Lower lobe of right lung (tissue), 2 donors: ENCODE measurements at regions of chr1 and their contacts with region 1.

Region 1: DNA sequence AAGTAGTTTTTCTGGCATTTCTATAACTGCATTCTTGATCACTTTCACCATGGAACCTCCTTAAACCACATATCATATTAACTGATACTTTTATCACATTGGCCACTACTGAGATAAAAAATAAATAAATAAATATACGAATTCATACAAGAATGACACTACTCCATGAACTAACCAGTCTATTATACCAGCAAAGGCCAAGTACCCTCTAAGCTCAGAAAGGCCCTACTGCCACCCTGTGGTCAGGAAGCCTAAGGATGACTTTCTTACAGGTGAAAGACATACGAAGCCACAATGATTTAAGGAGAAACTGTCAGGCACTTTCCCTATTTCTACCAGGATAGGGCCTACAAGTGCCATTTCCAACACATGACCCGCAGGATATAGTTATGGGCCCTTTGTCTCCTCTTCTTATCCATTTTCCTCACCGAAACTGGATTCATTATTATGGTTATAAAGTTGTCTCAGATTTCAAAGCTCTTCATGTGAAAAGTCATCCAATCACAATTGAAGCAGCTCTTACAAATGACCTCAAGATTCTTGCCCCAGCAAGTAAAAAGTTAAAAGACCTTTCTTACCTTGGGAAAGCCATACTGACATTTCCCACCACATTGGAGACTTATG is 23.9 kb downstream of the DNAJC8 start:
- DNase-seq: no peak
- ATAC-seq: peak; percentile 80 to 81
- H3K4me3 ChIP-seq: no peak overlapping the region
- H3K27ac ChIP-seq: no peak overlapping the region
- H3K4me1 ChIP-seq: peaks cover 8% of the 10 kb centered on the region
- H3K27me3 ChIP-seq: no peaks in the 10 kb centered on the region
- CTCF ChIP-seq: peak; percentile 80

Region 2: DNA sequence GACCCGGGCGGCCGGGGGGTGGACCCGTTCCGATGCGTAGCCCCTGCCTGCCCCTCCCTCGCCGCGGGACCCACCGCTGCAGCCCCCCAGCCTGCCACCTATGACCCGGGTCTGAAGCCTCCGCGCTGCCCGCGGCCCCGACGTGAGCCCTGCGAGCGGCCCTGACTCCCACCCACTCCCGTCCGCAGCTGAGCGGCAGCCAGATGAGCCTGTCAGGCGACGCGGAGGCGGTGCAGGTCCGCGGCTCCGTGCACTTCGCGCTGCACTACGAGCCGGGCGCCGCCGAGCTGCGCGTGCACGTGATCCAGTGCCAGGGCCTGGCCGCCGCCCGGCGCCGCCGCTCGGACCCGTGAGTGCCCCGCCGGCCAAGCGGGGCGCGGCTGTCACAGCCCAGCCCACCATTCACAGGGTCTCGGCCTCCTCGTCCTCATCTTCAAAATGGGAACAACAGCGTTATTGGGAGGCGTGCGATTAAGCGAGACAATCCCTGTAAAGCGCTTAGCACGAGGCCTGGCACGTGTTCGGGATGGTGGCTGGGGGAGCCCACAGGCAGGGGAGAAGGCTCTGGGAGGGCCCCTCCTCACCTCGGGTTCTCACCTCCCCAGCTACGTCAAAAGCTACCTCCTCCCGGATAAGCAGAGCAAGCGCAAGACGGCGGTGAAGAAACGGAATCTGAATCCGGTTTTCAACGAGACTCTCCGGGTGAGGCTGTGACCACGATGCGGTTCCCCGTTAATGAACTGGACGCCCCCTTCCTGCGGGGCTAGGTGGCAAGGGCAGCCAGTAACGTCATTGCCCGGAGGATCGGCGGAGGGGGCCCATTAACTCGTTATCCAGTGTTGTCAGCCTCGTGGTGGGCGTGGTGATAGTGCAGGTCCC is 858.9 kb before region 1 on chr1:
- intact Hi-C with region 1: no loop called
- DNase-seq: peak; percentile 83
- ATAC-seq: peak; percentile 87 to 89
- H3K4me3 ChIP-seq: peak overlapping the region; percentile 58
- H3K27ac ChIP-seq: peak overlapping the region; percentile 46
- H3K4me1 ChIP-seq: peaks cover 33% of the 10 kb centered on the region
- H3K27me3 ChIP-seq: no peaks in the 10 kb centered on the region
- CTCF ChIP-seq: no peak

Region 3: GRCh38 chr1:28091043-28091781 is 117.7 kb before region 1 on chr1:
- intact Hi-C with region 1: loop called (anchors 2 kb)
- DNase-seq: peak; percentile 69
- ATAC-seq: peak in 1 of 2 donors; percentile 29
- H3K4me3 ChIP-seq: no peak overlapping the region
- H3K27ac ChIP-seq: no peak overlapping the region
- H3K4me1 ChIP-seq: peaks cover 26% of the 10 kb centered on the region
- H3K27me3 ChIP-seq: no peaks in the 10 kb centered on the region
- CTCF ChIP-seq: peak; percentile 89

Region 4: DNA sequence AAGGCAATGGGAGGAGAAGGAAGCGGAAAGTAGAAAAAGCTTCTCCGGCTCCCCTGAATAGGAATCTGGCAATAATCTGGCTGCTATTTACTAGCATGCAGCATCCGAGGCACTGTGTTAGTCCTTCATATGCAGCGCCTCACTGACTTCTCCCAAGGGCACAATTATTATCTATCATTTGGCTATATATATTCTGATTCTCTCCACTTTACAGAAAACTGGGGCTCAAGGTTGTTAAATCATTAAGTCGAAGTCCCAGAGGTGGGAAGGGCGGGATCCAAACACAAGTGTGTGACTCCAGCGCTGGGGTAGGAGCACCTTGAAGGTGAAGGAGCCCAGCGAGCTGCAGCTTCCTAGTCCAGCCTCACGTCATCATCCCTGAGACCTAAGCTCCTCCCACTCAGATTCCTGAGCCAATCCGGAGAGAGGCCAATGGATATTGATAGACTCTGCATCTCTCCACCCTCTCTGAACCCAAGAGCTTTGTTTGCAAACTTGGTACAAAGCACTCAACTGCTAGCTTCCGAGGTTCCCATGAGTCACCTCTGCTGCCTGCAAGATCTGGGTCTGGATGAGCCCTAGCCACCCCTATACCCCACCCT is 104.0 kb before region 1 on chr1:
- intact Hi-C with region 1: no loop called
- DNase-seq: peak; percentile 54
- ATAC-seq: peak; percentile 96
- H3K4me3 ChIP-seq: peak overlapping the region; percentile 34
- H3K27ac ChIP-seq: peak overlapping the region; percentile 34
- H3K4me1 ChIP-seq: peaks cover 4% of the 10 kb centered on the region
- H3K27me3 ChIP-seq: no peaks in the 10 kb centered on the region
- CTCF ChIP-seq: no peak